RWPE1 (cell line): ENCODE measurements at regions of chr17 and their contacts with region 1.

Region 1: DNA sequence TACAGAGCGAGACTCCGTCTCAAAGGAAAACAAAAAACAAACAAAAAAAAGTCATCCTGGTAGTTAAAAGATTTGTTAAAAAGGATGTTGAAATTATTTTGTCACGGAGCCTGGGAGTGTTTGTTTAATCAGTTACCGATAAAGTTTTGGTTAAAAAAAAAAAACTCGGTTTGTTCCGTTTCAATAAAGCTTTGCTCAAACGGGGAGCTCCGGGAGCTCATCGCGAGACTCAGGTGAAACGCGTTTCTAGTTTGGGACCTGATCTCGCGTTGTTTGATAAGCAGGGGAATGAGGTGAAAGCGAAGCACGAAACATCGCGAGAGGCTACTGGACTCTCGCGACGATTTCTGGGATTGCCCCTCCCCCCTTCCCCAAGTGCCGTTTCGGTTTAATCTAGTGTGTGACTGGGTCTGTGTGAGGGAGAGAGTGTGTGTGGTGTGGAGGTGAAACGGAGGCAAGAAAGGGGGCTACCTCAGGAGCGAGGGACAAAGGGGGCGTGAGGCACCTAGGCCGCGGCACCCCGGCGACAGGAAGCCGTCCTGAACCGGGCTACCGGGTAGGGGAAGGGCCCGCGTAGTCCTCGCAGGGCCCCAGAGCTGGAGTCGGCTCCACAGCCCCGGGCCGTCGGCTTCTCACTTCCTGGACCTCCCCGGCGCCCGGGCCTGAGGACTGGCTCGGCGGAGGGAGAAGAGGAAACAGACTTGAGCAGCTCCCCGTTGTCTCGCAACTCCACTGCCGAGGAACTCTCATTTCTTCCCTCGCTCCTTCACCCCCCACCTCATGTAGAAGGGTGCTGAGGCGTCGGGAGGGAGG is at the start of gene CDK12:
- DNase-seq: peak; percentile 99
- H3K27ac ChIP-seq: peak within 1 kb of the TSS; percentile 95
- CTCF ChIP-seq: no peak

Region 2: DNA sequence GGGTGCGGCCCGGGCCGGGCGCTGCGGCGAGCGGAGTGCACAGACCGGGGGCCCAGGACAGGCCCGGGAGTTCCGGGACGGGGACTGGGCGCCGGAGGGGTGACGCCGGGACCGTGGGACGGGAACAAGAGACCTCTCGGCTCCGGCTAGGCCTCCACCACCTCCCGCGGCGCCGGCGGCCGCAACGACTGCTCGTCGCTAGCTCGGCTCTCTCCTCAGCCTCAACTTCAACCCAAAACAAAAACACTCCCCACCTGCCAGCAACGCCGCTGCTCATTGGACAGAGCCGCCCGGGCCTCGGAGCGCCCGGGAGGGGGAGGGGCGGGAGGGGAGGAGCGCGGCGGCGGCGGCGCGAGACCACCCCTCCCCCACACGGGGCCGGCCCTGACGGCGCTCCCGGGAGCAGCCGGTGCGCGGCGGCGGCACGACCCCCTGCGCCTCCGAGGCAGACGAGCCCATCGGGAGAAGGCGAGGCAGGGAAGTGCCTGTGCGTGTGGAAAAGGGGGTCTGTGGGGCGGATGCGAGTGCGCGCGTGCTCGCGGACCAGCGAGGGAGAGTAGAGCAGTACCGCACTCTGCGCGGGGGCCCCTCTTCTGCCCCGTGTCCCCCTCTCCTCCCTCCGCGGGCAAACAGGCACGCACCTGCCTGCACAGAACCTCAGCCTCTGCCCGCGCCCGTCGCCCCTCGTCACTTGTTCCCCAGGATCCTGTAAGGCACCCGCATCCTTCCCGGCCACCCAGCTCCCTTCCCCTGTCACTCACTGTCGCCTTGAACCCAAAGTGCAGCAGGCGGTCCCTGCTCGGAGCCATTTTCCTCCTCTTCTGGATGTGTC is 59.7 kb before region 1 on chr17 and contains the start of gene FBXL20:
- CTCF ChIA-PET with region 1: no interaction called
- POLR2A ChIA-PET with region 1: no interaction called
- DNase-seq: peak; percentile 98
- H3K27ac ChIP-seq: peak within 1 kb of the TSS; percentile 91
- CTCF ChIP-seq: no peak

Region 3: DNA sequence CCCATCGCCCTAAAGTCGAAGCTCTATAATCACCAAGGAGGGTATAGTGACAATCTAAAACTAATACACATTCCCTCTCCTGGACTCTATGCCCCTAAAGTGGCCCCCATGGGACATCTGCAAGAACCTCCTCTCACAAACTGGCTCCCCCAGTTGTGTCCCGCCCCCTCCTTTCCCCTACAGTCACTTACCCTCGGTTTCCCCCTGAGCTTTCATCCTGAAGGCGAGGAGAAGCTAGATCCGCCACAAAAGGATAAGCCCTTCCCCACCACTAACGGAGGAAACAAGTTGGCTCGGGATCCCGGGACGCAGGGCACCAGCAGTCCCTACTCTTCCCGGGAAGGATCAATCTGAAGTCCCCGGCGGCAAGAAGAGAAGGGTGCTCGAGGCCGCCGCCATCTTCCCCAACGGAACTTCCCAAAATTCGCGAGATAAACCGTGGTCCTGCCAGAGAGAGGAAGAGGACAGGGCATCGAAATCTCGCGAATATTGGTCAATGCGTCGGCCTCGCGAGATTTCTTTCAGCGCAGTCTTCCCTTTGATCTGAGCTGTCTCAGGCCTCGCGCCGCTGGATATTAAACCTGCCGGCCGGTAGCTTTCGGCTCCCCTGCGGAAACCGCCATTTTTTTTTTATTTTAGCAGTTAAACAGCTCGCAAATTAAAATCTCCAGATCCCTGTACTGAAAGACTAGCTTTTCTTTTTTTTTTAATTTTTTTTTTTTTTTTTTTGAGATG is 10.3 kb before region 1 on chr17 and contains the start of gene MED1:
- CTCF ChIA-PET with region 1: no interaction called
- POLR2A ChIA-PET with region 1: interaction called, 12 read pairs
- DNase-seq: peak; percentile 96
- H3K27ac ChIP-seq: peak within 1 kb of the TSS; percentile 78
- CTCF ChIP-seq: no peak